Natural killer cell (primary cell): ENCODE measurements at regions of chr4 and their contacts with region 1.

Region 1: DNA sequence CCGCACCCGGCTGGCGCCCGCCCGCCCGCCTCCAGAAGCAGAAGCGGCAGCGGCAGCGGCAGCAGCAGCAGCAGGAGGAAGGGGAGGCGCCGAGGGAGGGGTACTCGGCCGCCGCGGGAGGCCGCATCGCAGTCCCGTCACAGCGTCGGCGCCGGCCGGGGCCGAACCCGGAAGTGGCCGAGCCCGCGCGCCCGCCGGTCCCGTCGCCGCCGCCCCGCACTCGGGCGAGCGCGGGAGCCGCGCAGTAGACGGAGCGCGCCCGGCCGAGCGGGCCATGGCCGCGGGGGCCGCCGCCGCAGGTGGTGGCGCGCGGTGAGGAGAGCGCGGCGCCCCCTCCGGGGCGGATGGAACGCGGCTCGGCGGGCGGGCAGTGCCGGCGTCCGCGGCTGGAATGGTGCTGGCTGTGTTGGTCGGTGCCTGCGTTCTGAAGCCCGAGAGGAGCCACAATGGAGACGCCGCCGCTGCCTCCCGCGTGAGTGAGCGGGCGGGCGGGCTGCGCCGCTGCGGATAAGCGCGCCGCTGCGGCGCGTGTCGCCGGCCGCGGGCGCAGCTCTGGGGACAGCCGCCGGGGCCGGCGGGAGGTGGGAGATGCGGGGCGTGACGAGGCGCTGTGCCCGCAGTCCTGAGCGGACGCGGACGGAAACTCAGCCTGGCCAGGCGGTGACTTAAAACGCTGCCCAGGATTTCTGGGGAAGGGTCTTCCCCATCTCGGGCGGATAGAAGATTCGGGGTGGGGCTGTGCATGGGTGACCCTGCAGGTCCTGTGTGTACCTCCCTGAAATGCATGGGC is at the start of gene KLHL2:
- DNase-seq: peak; percentile 64 to 80
- ATAC-seq: peak; percentile 85 to 92 (median 89)
- H3K4me3 ChIP-seq: peak within 1 kb of the TSS; percentile 55
- H3K4me3 Mint-ChIP-seq: peak within 1 kb of the TSS; percentile 90
- H3K27ac ChIP-seq: peak within 1 kb of the TSS; percentile 52
- H3K27ac Mint-ChIP-seq: peak within 1 kb of the TSS; percentile 77 to 81
- H3K4me1 ChIP-seq: peaks cover 19% of the 10 kb centered on the region
- H3K4me1 Mint-ChIP-seq: peaks cover 44 to 49% of the 10 kb centered on the region in 2 donors
- H3K27me3 ChIP-seq: no peaks in the 10 kb centered on the region
- H3K27me3 Mint-ChIP-seq: no peaks in the 10 kb centered on the region
- CTCF ChIP-seq: no peak
- total RNA-seq, gene KLHL2: 24.2 to 29.2 (median 25.2) TPM

Region 2: GRCh38 chr4:164648151-164648848 is 559.3 kb before region 1 on chr4:
- intact Hi-C with region 1: no loop called
- DNase-seq: no peak
- ATAC-seq: no peak
- H3K4me3 ChIP-seq: no peak overlapping the region
- H3K4me3 Mint-ChIP-seq: no peak overlapping the region
- H3K27ac ChIP-seq: no peak overlapping the region
- H3K27ac Mint-ChIP-seq: no peak overlapping the region
- H3K4me1 ChIP-seq: no peaks in the 10 kb centered on the region
- H3K4me1 Mint-ChIP-seq: no peaks in the 10 kb centered on the region
- H3K27me3 ChIP-seq: no peaks in the 10 kb centered on the region
- H3K27me3 Mint-ChIP-seq: no peaks in the 10 kb centered on the region
- CTCF ChIP-seq: no peak

Region 3: GRCh38 chr4:164866817-164867490 is 340.7 kb before region 1 on chr4:
- intact Hi-C with region 1: no loop called
- DNase-seq: no peak
- ATAC-seq: no peak
- H3K4me3 ChIP-seq: no peak overlapping the region
- H3K4me3 Mint-ChIP-seq: no peak overlapping the region
- H3K27ac ChIP-seq: no peak overlapping the region
- H3K27ac Mint-ChIP-seq: no peak overlapping the region
- H3K4me1 ChIP-seq: no peaks in the 10 kb centered on the region
- H3K4me1 Mint-ChIP-seq: no peaks in the 10 kb centered on the region
- H3K27me3 ChIP-seq: no peaks in the 10 kb centered on the region
- H3K27me3 Mint-ChIP-seq: no peaks in the 10 kb centered on the region
- CTCF ChIP-seq: no peak

Region 4: GRCh38 chr4:165112368-165113139 is 95.1 kb before region 1 on chr4 and contains the start of gene TMEM192:
- intact Hi-C with region 1: loop called (anchors 5 kb)
- DNase-seq: peak; percentile 93 to 96
- ATAC-seq: peak; percentile 95 to 99 (median 96)
- H3K4me3 ChIP-seq: peak within 1 kb of the TSS; percentile 79
- H3K4me3 Mint-ChIP-seq: peak within 1 kb of the TSS; percentile 93
- H3K27ac ChIP-seq: peak within 1 kb of the TSS; percentile 83
- H3K27ac Mint-ChIP-seq: peak within 1 kb of the TSS; percentile 88 to 96
- H3K4me1 ChIP-seq: peaks cover 6% of the 10 kb centered on the region
- H3K4me1 Mint-ChIP-seq: peaks cover 18 to 26% of the 10 kb centered on the region in 2 donors
- H3K27me3 ChIP-seq: no peaks in the 10 kb centered on the region
- H3K27me3 Mint-ChIP-seq: peaks cover 9 to 11% of the 10 kb centered on the region in 2 donors
- CTCF ChIP-seq: no peak
- total RNA-seq, gene TMEM192: 9.4 to 11.4 (median 11.0) TPM